K562 (cell line): ENCODE measurements at regions of chr3 and their contacts with region 1.

Region 1: DNA sequence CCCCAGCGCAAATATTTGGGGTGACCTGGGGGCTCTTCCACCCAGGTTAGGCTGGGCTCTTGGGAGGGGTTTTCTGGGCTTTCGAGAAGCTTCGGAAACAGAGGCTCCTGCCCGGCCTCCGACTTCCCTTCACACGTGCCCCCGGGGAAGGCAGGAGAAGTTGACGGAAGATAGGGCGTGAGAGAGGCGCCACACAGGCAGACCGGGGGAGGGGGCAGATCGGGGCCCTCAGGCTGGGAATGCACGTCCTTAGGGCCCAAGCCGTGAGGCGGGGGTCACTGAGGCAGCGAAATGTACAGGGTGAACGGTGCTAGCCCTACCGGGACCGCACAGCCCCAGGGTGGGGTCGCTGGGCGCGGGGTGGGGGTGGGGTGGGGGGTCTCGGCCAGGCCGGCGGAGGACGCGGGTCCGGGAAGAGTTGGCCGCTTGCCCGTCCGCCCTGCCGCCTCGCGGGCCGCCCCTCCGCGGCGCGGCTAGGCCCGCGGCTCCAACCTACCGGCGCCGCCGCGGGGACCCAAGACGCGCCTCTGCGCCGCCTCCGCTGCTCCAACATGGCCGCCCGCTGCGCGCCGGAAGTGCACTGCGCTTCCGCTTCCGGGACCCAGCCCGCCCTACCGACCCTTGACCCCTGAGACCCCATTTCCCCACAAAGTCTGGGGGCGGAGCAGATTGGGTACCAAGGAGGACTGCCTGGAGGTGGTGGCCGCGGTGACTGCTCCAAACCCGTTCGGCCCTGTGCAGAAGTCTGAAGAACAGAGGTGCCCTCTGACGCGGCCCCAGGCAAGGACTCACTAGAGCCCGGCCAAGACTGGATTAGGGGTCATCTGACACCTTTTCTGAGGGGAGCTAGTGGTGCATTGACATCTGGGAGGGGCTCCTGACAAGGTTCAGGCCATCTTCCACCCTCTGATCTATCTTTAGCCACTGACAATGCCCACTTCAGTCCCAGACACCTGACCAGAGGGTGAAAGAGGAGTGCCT is at the start of gene CCDC71:
- DNase-seq: peak; percentile 81 to 90 (median 85)
- ATAC-seq: peak; percentile 87
- H3K4me3 ChIP-seq: peak within 1 kb of the TSS; percentile 82
- H3K27ac ChIP-seq: peak within 1 kb of the TSS; percentile 82
- H3K4me1 ChIP-seq: peaks cover 18 to 34% of the 10 kb centered on the region in 2 experiments; a peak in 4 of 5 replicates
- H3K27me3 ChIP-seq: no peaks in the 10 kb centered on the region
- CTCF ChIP-seq: no peak
- EP300 ChIP-seq: no peak
- POLR2A ChIP-seq: peak; percentile 53; the same call in 1 of the 2 replicates
- RAD21 ChIP-seq: no peak
- polyA plus RNA-seq, gene CCDC71: 0.13 to 0.31 TPM

Region 2: DNA sequence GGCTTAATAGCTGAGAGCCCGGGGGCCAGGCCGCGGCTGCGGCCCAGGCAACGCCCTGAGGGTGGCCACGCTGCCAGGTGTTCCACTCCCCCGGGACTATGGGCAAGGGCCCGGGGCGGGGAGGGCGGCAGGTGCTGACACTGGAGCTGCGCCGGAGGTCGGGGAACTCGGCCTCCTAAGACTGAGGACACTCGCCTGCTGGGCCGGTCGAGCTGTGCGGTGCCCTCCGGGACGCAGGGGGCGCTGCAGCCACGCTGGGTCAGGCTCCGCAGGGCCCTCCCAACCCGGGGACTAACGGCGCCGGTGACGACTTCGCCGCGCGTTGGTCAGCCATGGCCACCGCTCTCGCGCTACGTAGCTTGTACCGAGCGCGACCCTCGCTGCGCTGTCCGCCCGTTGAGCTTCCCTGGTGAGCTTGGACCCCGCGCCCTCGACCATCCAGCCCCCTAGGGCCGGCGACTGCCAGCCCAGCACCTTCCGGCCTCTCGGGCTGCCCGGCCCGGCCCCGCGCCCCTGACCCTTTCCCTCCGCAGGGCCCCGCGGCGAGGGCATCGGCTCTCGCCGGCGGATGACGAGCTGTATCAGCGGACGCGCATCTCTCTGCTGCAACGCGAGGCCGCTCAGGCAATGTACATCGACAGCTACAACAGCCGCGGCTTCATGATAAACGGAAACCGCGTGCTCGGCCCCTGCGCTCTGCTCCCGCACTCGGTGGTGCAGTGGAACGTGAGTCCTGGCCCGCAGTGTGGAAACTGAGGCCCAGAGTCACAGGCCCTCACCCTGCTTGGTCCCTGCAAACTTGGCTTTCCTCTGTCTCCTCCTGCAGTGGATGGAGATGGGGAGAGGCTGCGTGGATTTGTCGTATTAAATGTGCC is 144.0 kb before region 1 on chr3 and contains the start of gene NDUFAF3:
- CTCF ChIA-PET with region 1: no interaction called
- POLR2A ChIA-PET with region 1: interaction called, 3 read pairs
- in situ Hi-C with region 1: no loop called
- intact Hi-C with region 1: loop called (anchors 10 kb)
- DNase-seq: peak; percentile 74 to 91 (median 77)
- ATAC-seq: peak; percentile 76
- H3K4me3 ChIP-seq: peak within 1 kb of the TSS; percentile 74
- H3K27ac ChIP-seq: peak within 1 kb of the TSS; percentile 99
- H3K4me1 ChIP-seq: peaks cover 14 to 67% of the 10 kb centered on the region in 2 experiments; a peak in 4 of 5 replicates
- H3K27me3 ChIP-seq: no peaks in the 10 kb centered on the region
- CTCF ChIP-seq: peak; percentile 79 to 83 (median 82)
- EP300 ChIP-seq: no peak
- POLR2A ChIP-seq: no peak; the same call in none of the 2 replicates
- RAD21 ChIP-seq: no peak
- polyA plus RNA-seq, gene NDUFAF3: 17.0 to 36.3 TPM